Activated T-helper 1 cell treated with anti-CD3 and anti-CD28 coated beads, Interleukin-12 subunit alpha, Interleukin-12 subunit beta, Interleukin-2, Interleukin-4 antibody, amounts not matched to agents 30 ng/mL and 10 ng/mL and 1 ng/mL, durations not matched to agents 14 hours and 24 hours and 36 hours (primary cell): ENCODE measurements at regions of chr19 and their contacts with region 1.

Region 1: GRCh38 chr19:48203732-48204628 is 33.5 kb downstream of the ZSWIM9 start:
- DNase-seq: peak; percentile 92
- H3K4me3 Mint-ChIP-seq: no peak overlapping the region
- H3K27ac Mint-ChIP-seq: no peak overlapping the region
- H3K4me1 Mint-ChIP-seq: peaks cover 13% of the 10 kb centered on the region
- H3K27me3 Mint-ChIP-seq: no peaks in the 10 kb centered on the region

Region 2: DNA sequence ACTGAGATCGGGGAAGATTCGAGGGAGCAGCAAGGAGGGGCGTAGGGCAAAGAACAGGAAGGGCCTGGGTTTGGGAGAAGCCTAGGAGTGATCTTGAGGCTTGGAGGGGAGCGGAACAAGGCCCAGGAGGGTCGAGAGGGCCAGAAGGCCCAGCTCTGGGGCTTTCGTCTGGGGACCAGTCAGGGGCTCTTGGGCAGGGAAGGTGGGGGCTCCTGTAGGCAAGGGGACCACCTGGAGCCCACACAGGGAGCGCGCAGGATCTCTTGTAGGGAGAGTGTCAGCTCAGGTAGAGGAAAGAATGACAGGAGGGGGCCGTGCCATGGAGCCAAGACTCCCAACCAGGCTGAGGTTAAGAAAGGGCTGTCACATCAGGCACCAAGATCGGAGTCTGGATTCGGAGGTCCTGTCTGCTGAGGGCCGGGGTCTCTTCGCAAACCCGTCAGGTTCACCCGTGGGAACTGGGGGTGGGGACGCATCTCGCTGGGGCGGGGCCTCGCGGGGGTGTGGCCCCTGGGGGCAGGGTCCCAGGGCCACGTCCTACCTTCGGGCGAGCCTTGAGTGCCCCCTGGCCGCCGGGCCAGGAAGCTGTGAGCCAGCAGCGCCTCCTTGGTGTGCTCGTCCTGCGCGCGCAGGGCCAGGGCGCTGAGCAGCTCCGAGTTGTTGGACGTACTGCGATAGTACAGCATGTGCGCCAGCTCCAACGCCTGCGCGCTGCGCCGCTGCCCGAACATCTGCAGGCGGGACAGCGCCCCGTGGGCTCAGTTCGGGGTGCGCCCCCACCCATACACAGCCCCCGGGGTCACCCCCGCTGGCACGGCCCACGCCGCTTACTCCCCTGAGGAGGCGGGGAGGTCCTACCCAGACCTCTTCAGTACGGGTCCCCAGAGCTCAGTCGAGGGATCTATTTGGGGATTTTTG is 129.7 kb after region 1 on chr19:
- intact Hi-C with region 1: loop called (anchors 2 kb)
- DNase-seq: peak; percentile 92
- H3K4me3 Mint-ChIP-seq: peak overlapping the region; percentile 95
- H3K27ac Mint-ChIP-seq: peak overlapping the region; percentile 97
- H3K4me1 Mint-ChIP-seq: peaks cover 55% of the 10 kb centered on the region
- H3K27me3 Mint-ChIP-seq: peaks cover 1% of the 10 kb centered on the region

Region 3: DNA sequence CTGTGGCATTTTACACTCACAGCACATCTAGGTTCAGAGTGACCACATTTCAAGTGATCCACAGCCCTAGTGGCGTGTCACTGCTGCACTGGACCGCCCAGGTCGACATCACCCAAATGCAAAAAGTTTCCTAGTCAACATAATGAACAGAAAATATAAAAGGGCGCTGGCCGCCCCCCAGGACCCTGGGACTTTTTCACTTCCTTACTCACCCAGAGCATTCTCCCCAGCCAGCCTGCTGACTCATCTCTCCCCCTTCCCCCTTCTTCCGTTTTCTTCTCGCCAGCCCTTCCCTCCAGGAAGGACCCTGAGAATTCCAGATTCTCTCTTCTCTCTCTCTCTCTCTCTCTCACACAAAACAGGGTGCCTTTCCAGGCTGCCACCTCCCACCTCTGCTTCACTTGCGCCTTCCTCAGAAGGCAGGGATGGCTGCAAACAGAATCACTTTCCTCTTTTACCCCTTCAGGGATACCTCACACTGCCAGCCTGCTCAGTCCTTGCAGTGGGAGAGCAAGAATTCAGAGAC is 220.8 kb after region 1 on chr19:
- intact Hi-C with region 1: no loop called
- DNase-seq: no peak
- H3K4me3 Mint-ChIP-seq: no peak overlapping the region
- H3K27ac Mint-ChIP-seq: no peak overlapping the region
- H3K4me1 Mint-ChIP-seq: peaks cover 7% of the 10 kb centered on the region
- H3K27me3 Mint-ChIP-seq: peaks cover 5% of the 10 kb centered on the region